Left lung (tissue), 14 donors: ENCODE measurements at regions of chr17 and their contacts with region 1.

Region 1: DNA sequence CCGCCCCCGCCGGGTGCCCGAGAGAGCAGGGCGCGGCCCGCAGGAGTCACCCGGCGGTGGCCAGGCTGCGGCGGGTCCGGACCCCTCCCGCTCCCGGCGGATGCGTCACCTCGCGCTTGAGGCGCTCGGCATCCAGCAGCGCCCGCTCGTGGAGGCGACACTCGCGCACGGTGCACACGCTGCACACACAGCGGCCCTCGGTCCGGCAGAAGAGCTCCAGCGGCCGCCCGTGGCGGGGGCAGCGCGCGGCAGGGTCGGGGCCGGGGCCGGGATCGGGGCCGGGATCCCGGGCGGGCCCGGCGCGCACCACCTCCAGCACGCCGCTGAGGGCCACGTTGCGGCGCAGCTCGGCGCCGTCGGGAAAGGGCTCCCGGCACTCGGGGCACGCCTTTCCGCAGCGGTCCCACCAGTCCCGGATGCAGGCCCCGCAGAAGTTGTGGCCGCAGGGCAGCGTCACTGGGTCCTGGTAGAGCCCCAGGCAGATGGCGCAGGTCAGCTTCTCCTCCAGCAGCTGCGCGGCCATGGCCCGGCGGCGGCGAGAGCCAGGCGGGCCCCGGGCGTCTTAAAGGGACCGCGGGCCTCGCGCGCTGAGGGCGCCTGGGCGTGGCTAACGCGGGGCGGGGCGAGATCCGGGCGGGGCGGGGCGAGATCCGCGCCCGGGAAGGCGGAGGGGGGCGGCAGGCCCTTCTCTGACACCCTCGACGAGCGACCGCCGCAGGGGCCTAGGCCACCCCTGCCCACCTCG is at the start of gene TRIM65:
- DNase-seq: peak; percentile 79 to 96 (median 89)
- ATAC-seq: peak; percentile 88
- H3K4me3 ChIP-seq: peak within 1 kb of the TSS; percentile 67 to 68
- H3K27ac ChIP-seq: peak within 1 kb of the TSS; percentile 92 to 94
- H3K4me1 ChIP-seq: peaks cover 17 to 28% of the 10 kb centered on the region in 2 donors
- H3K27me3 ChIP-seq: no peaks in the 10 kb centered on the region
- CTCF ChIP-seq: peak in 1 of 2 donors; percentile 20
- polyA plus RNA-seq, gene TRIM65: 15.8 to 30.9 (median 19.1) TPM

Region 2: DNA sequence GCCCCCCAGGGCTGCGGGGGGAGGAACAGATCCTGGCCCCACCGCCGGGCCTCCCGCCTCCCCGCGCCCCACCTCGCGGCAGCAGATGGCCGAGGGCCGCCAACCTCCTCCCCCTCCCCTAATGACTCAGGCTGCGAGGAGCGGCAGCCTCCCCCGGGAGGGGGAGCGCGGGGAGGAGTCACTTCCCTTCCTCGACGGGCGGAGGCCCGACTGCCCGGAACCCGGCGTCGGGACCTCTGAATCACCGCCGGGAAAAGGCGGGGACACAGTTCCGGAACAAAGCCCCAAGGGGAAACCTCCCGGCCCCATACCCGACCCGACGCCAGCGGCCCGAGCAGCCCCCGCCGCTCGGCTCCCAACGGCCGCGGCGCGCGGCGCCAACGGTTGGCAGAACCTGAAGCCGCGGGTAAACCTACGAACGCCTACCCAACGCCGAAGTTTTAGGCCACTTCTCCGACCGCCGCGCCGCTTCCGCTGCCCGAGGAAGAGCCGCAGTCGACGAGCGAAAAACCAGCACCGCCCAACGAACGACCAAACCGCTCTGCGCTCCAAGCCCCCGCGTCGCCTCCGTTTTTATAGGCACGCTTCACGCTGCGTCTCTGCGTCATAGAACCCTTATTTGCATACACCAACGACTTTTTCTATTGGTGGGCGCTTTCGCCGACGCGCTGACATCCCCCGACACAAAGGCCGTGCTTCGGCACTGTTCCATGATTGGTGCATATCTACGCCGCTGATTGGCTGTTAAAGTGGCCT is 117.2 kb before region 1 on chr17:
- intact Hi-C with region 1: loop called in 1 of 2 experiments (anchors 10 kb)
- DNase-seq: peak; percentile 97 to 100 (median 98)
- ATAC-seq: peak; percentile 75
- H3K4me3 ChIP-seq: peak overlapping the region; percentile 64 to 93
- H3K27ac ChIP-seq: peak overlapping the region; percentile 96 to 99
- H3K4me1 ChIP-seq: peaks cover 10 to 66% of the 10 kb centered on the region in 2 donors
- H3K27me3 ChIP-seq: no peaks in the 10 kb centered on the region
- CTCF ChIP-seq: no peak

Region 3: DNA sequence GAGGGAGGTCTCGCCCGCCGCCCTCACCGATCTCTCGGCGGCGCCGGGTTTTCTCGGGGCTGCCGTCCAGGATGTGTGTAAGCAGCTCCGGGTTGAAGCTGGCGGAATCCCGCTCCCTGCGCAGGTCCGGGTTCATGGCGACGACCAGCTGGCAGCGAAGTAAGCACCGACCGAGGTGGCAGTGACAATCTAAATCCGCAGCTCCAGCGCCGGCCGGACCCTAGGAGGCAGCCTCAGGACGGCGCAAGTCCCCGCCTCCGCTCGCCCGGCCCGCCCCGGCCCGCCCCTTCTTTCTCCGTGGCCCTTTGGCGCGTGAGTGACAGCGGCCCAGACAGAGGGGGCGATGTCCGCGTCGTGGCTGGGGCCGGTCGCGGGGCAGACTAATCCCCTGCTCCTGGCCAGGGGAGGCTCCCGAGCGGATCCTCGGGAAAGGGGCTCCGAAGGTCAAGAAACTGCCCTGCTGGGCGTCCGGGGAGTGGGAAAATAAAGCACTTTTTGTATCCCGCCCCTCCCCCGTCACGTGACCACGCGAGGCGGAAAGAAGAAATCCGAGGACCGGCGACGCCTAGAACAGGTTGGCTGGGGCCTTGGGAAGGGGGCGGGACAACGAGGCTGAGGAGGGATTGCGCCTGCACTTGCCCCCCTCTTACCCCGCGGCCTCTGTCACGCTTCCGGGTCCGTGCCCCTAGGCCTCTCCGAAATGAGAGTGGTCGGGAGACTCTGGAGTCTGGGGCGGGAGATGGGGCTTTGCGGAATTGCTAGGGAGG is 82.5 kb after region 1 on chr17 and contains the starts of genes ACOX1 and TEN1:
- intact Hi-C with region 1: no loop called
- DNase-seq: peak; percentile 98 to 99 (median 98)
- ATAC-seq: peak; percentile 94
- H3K4me3 ChIP-seq: peak within 1 kb of the TSS; percentile 81 to 91
- H3K27ac ChIP-seq: peak within 1 kb of the TSS; percentile 97 to 99
- H3K4me1 ChIP-seq: peaks cover 40 to 76% of the 10 kb centered on the region in 2 donors
- H3K27me3 ChIP-seq: no peaks in the 10 kb centered on the region
- CTCF ChIP-seq: peak; percentile 25 to 29
- polyA plus RNA-seq, gene ACOX1: 25.6 to 34.5 (median 29.4) TPM
- polyA plus RNA-seq, gene TEN1: 24.5 to 32.2 (median 29.7) TPM